Activated CD8-positive, alpha-beta T cell treated with anti-CD3 and anti-CD28 coated beads for 36 hours (primary cell): ENCODE measurements at regions of chr17 and their contacts with region 1.

Region 1: DNA sequence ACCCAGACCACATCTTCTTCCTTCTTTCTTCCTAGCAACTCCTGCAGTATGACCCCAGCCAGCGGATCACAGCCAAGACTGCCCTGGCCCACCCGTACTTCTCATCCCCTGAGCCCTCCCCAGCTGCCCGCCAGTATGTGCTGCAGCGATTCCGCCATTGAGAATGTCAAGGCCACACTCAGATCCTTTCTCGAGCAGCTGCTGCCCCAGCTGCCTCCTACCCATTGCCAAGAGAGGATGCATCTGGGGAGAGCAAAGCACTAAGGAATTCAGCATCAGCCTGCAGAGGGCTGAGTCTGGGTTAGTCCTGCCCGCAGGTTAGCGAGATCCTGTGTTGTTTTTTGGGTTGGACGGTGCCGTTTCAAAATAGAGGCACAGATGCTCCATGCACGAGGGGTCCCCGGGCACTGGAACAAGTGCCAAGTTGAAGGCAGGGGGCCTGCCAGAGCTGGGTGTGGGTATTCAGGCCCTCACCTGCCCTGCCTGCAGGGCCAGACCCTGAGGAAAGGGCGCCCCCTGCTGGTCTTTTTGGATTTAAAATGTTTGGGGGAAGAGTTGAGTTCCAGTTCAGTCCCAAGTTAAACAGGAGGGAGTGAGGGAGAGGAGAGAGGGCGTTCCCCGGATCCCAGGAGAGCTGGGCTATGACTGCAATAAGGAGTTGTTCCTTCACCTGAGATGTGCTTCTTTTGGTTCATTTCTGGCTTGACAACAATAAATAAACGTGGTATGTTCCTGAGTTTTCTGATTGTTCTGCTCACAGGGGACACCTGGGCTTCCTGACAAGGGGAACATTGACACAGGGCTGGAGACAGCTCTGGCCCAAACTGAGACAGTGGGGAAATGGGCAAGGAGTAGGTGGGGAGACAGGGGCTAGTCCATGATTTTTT is 4.9 kb downstream of the CDK3 start:
- DNase-seq: peak; percentile 89
- ATAC-seq: peak; percentile 84
- H3K4me3 Mint-ChIP-seq: no peak overlapping the region
- H3K27ac Mint-ChIP-seq: no peak overlapping the region
- H3K4me1 Mint-ChIP-seq: no peaks in the 10 kb centered on the region
- H3K27me3 Mint-ChIP-seq: no peaks in the 10 kb centered on the region
- CTCF ChIP-seq: peak; percentile 81

Region 2: DNA sequence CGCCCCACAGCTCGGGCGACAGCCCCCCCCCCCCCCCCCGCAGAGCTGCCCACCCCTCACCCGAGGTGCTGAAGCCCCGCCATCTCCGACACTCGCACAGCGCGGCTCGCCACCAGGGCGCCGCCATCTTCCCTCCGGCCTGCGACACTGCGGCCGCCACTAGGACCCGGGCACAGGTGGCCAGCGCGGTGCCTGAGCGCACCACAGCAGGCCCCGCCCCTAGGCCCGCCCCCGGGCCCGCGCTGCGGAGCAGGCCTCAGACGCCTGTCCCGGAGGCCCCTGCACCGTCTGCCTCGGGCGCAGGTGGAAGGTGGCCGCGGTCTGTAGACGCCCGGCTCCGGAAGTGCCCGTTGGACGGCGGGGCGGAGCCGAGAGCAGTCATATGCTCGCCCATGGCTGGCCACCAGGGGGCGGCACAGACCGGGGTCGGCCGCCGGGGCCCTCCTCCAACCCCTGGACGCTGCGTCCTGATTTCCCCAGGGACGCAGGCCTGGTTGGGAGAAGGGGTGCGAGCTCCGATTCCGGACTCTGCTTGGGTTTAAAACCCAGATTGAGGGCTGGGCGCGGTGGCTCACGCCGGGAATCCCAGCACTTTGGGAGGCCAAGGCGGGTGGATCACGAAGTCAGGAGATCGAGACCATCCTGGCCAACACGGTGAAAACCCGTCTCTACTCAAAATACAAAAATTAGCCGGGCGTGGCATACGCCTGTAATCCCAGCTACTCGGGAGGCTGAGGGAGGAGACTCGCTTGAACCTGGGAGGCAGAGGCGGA is 100.6 kb before region 1 on chr17 and contains the start of gene MRPL38:
- CTCF ChIA-PET with region 1: interaction called, 165 read pairs
- POLR2A ChIA-PET with region 1: interaction called, 3 read pairs
- intact Hi-C with region 1: loop called (anchors 5 kb)
- DNase-seq: peak; percentile 96
- ATAC-seq: peak; percentile 98
- H3K4me3 Mint-ChIP-seq: peak within 1 kb of the TSS; percentile 87
- H3K27ac Mint-ChIP-seq: peak within 1 kb of the TSS; percentile 92
- H3K4me1 Mint-ChIP-seq: peaks cover 15% of the 10 kb centered on the region
- H3K27me3 Mint-ChIP-seq: no peaks in the 10 kb centered on the region
- CTCF ChIP-seq: peak; percentile 99
- total RNA-seq, gene MRPL38: 117 to 126 TPM

Region 3: DNA sequence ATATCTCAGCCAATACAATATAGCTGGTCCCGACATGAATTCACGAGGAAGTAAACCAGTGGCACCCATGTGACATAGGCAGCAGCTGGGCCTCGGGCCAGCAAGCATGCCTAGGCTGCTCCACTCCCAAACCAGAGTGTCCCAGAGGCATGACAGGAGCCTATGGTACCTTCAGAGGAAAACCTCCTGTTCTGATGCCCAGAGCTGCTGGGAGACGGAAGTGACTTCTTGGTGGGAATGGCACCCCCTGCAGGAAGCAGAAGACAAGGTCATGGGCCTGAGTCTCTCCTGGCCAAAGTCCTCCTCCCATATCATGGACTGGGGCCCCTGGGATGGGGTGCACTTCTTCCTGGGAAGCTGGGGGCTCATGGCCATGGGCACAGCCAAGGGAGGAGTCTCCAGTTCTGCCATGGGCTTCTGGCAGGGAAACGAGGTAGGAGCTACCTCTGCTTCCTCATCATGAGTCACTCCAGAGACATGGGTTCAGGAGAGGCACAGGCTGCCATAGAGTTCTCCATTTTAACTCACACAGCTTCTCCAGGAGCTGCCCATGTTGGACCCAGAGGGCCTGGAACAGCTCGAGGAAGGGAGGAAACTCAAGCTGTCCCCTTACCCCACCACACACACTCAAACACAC is 78.1 kb before region 1 on chr17:
- CTCF ChIA-PET with region 1: interaction called, 10 read pairs
- POLR2A ChIA-PET with region 1: interaction called, 4 read pairs
- intact Hi-C with region 1: no loop called
- DNase-seq: peak; percentile 28
- ATAC-seq: peak; percentile 51
- H3K4me3 Mint-ChIP-seq: no peak overlapping the region
- H3K27ac Mint-ChIP-seq: no peak overlapping the region
- H3K4me1 Mint-ChIP-seq: no peaks in the 10 kb centered on the region
- H3K27me3 Mint-ChIP-seq: no peaks in the 10 kb centered on the region
- CTCF ChIP-seq: no peak

Region 4: GRCh38 chr17:76019830-76020467 is 14.4 kb after region 1 on chr17:
- CTCF ChIA-PET with region 1: interaction called, 122 read pairs
- POLR2A ChIA-PET with region 1: interaction called, 3 read pairs
- intact Hi-C with region 1: no loop called
- DNase-seq: no peak
- ATAC-seq: no peak
- H3K4me3 Mint-ChIP-seq: no peak overlapping the region
- H3K27ac Mint-ChIP-seq: no peak overlapping the region
- H3K4me1 Mint-ChIP-seq: no peaks in the 10 kb centered on the region
- H3K27me3 Mint-ChIP-seq: no peaks in the 10 kb centered on the region
- CTCF ChIP-seq: no peak